Naive thymus-derived CD8-positive, alpha-beta T cell (primary cell): ENCODE measurements at regions of chr12 and their contacts with region 1.

Region 1: GRCh38 chr12:55973598-55974307 is at the start of gene RAB5B:
- DNase-seq: peak; percentile 89 to 100 (median 98)
- ATAC-seq: peak; percentile 90
- H3K4me3 Mint-ChIP-seq: no peak within 1 kb of the TSS
- H3K27ac Mint-ChIP-seq: no peak within 1 kb of the TSS
- H3K4me1 Mint-ChIP-seq: peaks cover 10 to 28% (median 24%) of the 10 kb centered on the region in 4 donors
- H3K27me3 Mint-ChIP-seq: no peaks in the 10 kb centered on the region
- polyA plus RNA-seq, gene RAB5B: 61.6 to 69.4 (median 65.9) TPM

Region 2: GRCh38 chr12:55817346-55818139 is 156.2 kb before region 1 on chr12 and contains the starts of genes ORMDL2 and SARNP:
- POLR2A ChIA-PET with region 1: interaction called, 41 read pairs
- DNase-seq: peak; percentile 85 to 99 (median 98)
- ATAC-seq: peak; percentile 92 to 93
- H3K4me3 Mint-ChIP-seq: peak within 1 kb of the TSS in 1 of 10 donors; percentile 77
- H3K27ac Mint-ChIP-seq: no peak within 1 kb of the TSS
- H3K4me1 Mint-ChIP-seq: peaks cover 10 to 51% (median 41%) of the 10 kb centered on the region in 4 donors
- H3K27me3 Mint-ChIP-seq: no peaks in the 10 kb centered on the region
- polyA plus RNA-seq, gene ORMDL2: 71.6 to 92.5 (median 90.3) TPM
- polyA plus RNA-seq, gene SARNP: 93.6 to 104 (median 94.0) TPM

Region 3: GRCh38 chr12:55926738-55927587 is 46.8 kb before region 1 on chr12:
- POLR2A ChIA-PET with region 1: interaction called, 50 read pairs
- DNase-seq: peak; percentile 77 to 96 (median 88)
- ATAC-seq: peak; percentile 41 to 46
- H3K4me3 Mint-ChIP-seq: peak overlapping the region; percentile 92 to 100 (median 98)
- H3K27ac Mint-ChIP-seq: peak overlapping the region; percentile 95 to 100 (median 98)
- H3K4me1 Mint-ChIP-seq: peaks cover 34 to 67% (median 51%) of the 10 kb centered on the region in 4 donors
- H3K27me3 Mint-ChIP-seq: no peaks in the 10 kb centered on the region

Region 4: DNA sequence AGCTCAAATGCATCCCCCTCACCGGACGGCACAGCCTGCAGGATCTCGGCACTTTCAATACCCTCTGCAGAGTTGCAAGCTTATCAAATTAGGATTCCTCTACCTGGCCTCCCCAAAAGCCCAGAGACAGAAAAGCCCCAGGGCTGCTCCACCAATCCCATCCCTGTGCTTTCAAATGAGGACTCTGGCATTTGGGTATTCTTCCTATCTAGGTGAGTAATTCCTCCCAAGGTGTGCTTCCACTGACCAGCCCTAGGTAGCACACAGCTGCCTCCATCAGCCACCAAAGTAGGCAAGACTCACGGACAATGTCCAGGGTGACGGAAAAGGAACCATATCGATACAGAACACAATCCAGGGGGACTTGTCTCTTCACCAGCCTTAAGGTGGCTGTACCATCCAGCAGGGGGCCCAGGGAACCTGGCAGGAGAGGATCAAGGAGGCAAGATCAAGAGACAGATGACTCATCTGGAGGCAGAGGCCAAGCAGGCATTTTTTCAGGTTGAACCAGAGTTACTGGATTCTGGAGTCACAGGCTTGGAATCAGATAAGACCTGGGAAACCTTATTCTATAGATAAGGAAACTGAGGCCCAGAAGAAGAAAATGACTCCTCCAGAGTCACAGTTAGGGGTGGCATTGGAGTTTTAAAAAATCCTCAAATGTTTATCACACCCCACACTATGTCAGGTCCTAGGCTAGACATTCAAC is 17.8 kb before region 1 on chr12:
- POLR2A ChIA-PET with region 1: interaction called, 31 read pairs
- DNase-seq: peak in 7 of 10 donors; percentile 11 to 79 (median 35)
- ATAC-seq: peak; percentile 71 to 81
- H3K4me3 Mint-ChIP-seq: no peak overlapping the region
- H3K27ac Mint-ChIP-seq: peak overlapping the region; percentile 56 to 87 (median 82)
- H3K4me1 Mint-ChIP-seq: peaks cover 16 to 43% (median 26%) of the 10 kb centered on the region in 4 donors
- H3K27me3 Mint-ChIP-seq: no peaks in the 10 kb centered on the region

Region 5: DNA sequence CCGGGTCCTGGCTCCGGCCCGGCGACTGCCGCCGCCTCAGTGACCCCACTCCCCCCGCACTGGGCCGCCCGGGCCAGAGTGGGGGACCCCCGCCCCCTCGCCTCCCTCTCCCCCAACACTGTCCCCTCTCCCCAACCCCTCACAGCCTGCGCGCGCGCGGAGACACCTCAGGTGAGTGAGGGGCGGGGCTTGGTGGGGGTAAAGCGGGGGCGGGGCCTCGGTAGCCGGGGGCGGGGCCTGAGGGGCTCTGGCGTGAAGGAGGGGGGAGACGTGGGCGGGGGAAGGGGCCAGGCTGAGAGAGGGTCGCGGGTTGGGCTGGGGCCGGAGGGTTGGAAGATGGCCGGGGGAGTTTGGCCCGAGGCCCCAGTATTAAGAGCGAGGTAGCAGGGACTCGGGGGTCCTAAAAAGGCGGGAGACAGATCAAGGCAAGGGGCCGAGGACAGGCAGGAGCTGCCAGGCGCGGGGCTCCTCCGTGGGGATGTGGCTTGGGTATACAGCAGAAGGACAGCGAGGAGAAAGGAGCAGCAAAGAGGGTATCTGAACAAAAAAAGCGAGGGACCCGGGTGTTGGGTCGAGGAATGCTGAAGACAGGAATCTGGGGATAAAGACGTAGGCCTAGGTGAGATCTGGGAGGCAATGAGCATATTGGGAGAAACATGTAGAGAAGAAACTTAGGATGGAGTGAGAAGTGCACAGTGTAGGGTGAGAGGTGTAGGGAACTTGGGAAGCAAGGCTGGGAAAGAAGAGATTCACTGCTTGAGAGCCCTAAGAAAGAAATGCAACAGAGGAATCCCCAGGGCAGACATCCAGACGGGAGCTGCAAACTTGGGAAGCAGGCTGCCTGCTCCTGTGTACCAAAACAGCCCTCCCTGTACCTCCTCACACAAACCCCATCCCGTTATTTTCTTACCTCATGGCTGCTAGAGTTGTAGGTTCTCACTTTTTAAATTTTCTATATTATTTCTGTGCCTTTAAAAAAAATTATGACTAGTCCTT is 34.1 kb after region 1 on chr12:
- POLR2A ChIA-PET with region 1: interaction called, 19 read pairs
- DNase-seq: peak; percentile 35 to 84 (median 65)
- ATAC-seq: peak; percentile 83 to 87
- H3K4me3 Mint-ChIP-seq: peak overlapping the region; percentile 75 to 92 (median 90)
- H3K27ac Mint-ChIP-seq: peak overlapping the region; percentile 82 to 94 (median 88)
- H3K4me1 Mint-ChIP-seq: peaks cover 13 to 30% (median 25%) of the 10 kb centered on the region in 4 donors
- H3K27me3 Mint-ChIP-seq: no peaks in the 10 kb centered on the region

Region 6: DNA sequence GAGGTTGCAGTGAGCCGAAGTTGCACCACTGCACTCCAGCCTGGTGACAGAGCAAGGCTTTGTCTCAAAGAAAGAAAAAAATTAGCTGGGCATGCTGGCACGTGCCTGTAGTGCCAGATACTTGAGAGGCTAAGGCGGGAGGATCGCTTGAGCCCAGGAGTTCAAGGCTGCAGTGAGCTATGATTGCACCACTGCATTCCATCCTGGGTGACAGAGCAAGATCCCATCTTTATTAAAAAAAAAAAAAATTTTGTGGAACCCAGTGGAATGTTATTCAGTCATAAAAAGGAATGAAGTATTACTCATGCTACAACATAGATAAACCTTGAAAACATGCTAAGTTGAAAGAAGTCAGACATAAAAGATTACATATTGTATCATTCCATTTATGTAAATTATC is 97.9 kb after region 1 on chr12:
- POLR2A ChIA-PET with region 1: no interaction called
- DNase-seq: no peak
- ATAC-seq: no peak
- H3K4me3 Mint-ChIP-seq: no peak overlapping the region
- H3K27ac Mint-ChIP-seq: peak overlapping the region in 1 of 10 donors; percentile 73
- H3K4me1 Mint-ChIP-seq: no peaks in the 10 kb centered on the region
- H3K27me3 Mint-ChIP-seq: no peaks in the 10 kb centered on the region

Region 7: GRCh38 chr12:56346703-56347102 is 372.9 kb after region 1 on chr12:
- POLR2A ChIA-PET with region 1: no interaction called
- DNase-seq: no peak
- ATAC-seq: no peak
- H3K4me3 Mint-ChIP-seq: no peak overlapping the region
- H3K27ac Mint-ChIP-seq: peak overlapping the region in 3 of 10 donors; percentile 19 to 85 (median 71)
- H3K4me1 Mint-ChIP-seq: peaks cover 0 to 2% (median under 1%) of the 10 kb centered on the region in 4 donors
- H3K27me3 Mint-ChIP-seq: no peaks in the 10 kb centered on the region